ENCODE measurements at regions of chr17 and their contacts with region 1.

Region 1: GRCh38 chr17:36601303-36602029 is at the start of gene MRM1:
- DNase-seq: peak; percentile 96
- H3K4me3 ChIP-seq: peak within 1 kb of the TSS; percentile 68 to 97 (median 84)
- H3K27ac ChIP-seq: peak within 1 kb of the TSS; percentile 80 to 89 (median 83)
- H3K4me1 ChIP-seq: peaks cover 0 to 29% (median 19%) of the 10 kb centered on the region in 4 donors
- H3K27me3 ChIP-seq: no peaks in the 10 kb centered on the region
- CTCF ChIP-seq: no peak
- EP300 ChIP-seq: no peak
- POLR2A ChIP-seq: peak; percentile 34 to 73
- total RNA-seq, gene MRM1: 2.8 to 5.3 (median 3.9) TPM

Region 2: GRCh38 chr17:36545465-36546417 is 55.7 kb before region 1 on chr17:
- intact Hi-C with region 1: loop called (anchors 2 kb)
- DNase-seq: peak; percentile 99
- H3K4me3 ChIP-seq: peak overlapping the region; percentile 68 to 96 (median 92)
- H3K27ac ChIP-seq: peak overlapping the region; percentile 95 to 100 (median 98)
- H3K4me1 ChIP-seq: peaks cover 0 to 60% (median 54%) of the 10 kb centered on the region in 4 donors
- H3K27me3 ChIP-seq: no peaks in the 10 kb centered on the region
- CTCF ChIP-seq: no peak
- EP300 ChIP-seq: no peak
- POLR2A ChIP-seq: peak; percentile 73 to 79

Region 3: GRCh38 chr17:36948717-36949460 is 347.4 kb after region 1 on chr17 and contains the start of gene AATF:
- intact Hi-C with region 1: loop called (anchors 10 kb)
- DNase-seq: peak; percentile 98
- H3K4me3 ChIP-seq: peak within 1 kb of the TSS; percentile 78 to 86 (median 82)
- H3K27ac ChIP-seq: peak within 1 kb of the TSS; percentile 85 to 96 (median 91)
- H3K4me1 ChIP-seq: peaks cover 0 to 28% (median 21%) of the 10 kb centered on the region in 4 donors
- H3K27me3 ChIP-seq: peaks cover 27 to 37% (median 36%) of the 10 kb centered on the region in 3 donors
- CTCF ChIP-seq: no peak
- EP300 ChIP-seq: peak in 1 of 4 donors; percentile 43
- POLR2A ChIP-seq: peak; percentile 69 to 70
- total RNA-seq, gene AATF: 32.4 to 38.3 (median 34.6) TPM

Region 4: DNA sequence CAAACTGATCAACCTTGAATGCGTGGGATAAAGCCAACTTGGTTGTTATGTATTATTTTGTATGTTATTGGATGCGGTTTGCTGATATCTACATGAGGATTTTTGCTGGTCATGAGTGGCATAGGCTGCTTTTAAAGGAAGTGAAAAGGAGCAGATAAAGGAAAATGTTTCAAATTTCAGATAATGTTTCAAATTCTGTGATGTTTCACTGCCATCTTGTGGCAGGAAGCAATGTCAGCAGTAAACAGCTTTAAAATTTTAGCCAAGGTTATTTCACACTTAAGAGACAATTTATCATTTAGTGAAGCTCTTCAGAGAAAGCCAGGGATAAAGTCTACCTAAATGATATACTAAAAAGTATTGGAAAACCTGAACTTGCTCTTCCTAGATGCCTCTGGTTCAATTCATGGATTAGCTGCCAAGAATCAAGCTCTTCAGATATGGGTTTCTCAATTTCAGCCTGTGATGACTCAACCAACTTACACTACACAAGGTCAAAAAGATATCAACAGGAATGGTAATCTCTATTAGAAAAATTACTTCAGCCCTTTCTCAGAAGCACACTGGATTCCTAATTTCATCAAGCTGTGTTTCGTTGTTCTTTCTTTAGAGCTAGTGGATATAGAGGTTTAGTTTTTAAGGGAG is 638.3 kb after region 1 on chr17:
- intact Hi-C with region 1: loop called (anchors 10 kb)
- DNase-seq: no peak
- H3K4me3 ChIP-seq: no peak overlapping the region
- H3K27ac ChIP-seq: no peak overlapping the region
- H3K4me1 ChIP-seq: no peaks in the 10 kb centered on the region
- H3K27me3 ChIP-seq: no peaks in the 10 kb centered on the region
- CTCF ChIP-seq: peak in 2 of 4 experiments; percentile 16 to 50
- EP300 ChIP-seq: no peak
- POLR2A ChIP-seq: no peak

Region 5: GRCh38 chr17:37358830-37359681 is 757.6 kb after region 1 on chr17:
- intact Hi-C with region 1: loop called (anchors 10 kb)
- DNase-seq: peak; percentile 96
- H3K4me3 ChIP-seq: peak overlapping the region; percentile 63 to 93 (median 76)
- H3K27ac ChIP-seq: peak overlapping the region; percentile 92 to 97 (median 94)
- H3K4me1 ChIP-seq: peaks cover 0 to 25% (median 22%) of the 10 kb centered on the region in 4 donors
- H3K27me3 ChIP-seq: no peaks in the 10 kb centered on the region
- CTCF ChIP-seq: peak in 1 of 4 experiments; percentile 46
- EP300 ChIP-seq: no peak
- POLR2A ChIP-seq: peak; percentile 16 to 20